Astrocyte of the cerebellum (primary cell): ENCODE measurements at regions of chr15 and their contacts with region 1.

Region 1: DNA sequence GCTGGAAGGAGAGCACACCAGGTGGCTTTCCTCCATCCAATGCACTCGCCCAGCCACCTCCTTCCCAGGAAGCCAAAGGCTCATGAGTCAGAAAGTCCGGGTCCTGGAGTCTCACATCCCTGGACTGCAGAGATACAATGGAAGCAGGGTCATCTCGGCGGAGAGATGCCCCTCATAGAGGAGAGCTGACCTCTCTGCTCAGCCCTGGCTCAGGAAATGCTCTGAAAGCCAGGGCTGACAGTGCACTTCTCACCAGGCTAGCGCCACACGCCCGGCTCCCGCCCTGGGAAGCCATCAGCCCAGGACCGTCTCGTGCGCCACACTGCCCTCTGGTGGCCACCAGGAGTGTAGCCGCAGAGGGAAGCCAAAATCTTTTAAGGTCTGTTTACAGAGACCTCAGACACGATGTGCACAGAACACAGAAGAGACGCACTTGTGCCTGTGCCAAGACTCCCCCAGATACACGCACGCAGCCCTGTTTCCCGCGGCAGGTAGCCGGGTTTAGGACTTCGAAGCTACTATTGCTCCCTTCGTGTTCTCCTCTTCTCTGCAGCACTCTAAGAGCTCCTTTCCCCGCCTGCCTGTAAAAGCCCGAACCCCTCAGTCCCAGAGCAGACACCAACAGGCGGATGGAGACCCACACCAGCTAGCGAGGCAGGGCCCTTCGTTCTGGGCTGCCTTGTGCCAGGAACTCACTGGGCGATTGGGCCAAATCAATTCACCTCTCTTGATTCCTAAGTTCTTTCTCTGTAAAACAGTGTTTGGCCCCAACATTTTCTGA is 9.7 kb downstream of the NTRK3 start:
- DNase-seq: peak; percentile 42
- H3K4me3 ChIP-seq: peak overlapping the region; percentile 22
- CTCF ChIP-seq: peak; percentile 92

Region 2: GRCh38 chr15:87144775-87145174 is 1102.1 kb before region 1 on chr15:
- in situ Hi-C with region 1: loop called (anchors 5 kb)
- DNase-seq: no peak
- H3K4me3 ChIP-seq: no peak overlapping the region
- CTCF ChIP-seq: no peak

Region 3: GRCh38 chr15:88193415-88193814 is 53.4 kb before region 1 on chr15:
- in situ Hi-C with region 1: loop called (anchors 5 kb)
- DNase-seq: no peak
- H3K4me3 ChIP-seq: no peak overlapping the region
- CTCF ChIP-seq: no peak

Region 4: DNA sequence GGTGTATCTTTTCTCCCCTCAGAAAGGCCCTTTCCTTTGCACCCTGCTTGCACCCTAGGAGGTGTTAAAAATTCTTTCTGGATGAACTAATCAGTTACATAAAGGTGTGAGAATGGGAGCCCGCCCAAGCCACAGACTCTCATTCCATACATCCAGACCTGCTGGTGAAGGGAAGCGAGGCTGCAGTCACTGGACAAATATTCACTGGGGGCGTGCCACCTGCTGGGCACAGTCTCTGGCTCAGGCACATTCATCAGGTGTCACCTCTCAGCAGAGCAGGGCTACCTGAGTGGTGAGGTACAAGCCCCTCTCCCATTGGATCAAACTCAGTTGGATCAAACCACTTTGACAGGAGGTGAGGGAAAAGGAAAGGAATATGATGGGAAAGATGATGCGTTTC is 42.3 kb before region 1 on chr15:
- in situ Hi-C with region 1: no loop called
- DNase-seq: no peak
- H3K4me3 ChIP-seq: no peak overlapping the region
- CTCF ChIP-seq: no peak

Region 5: DNA sequence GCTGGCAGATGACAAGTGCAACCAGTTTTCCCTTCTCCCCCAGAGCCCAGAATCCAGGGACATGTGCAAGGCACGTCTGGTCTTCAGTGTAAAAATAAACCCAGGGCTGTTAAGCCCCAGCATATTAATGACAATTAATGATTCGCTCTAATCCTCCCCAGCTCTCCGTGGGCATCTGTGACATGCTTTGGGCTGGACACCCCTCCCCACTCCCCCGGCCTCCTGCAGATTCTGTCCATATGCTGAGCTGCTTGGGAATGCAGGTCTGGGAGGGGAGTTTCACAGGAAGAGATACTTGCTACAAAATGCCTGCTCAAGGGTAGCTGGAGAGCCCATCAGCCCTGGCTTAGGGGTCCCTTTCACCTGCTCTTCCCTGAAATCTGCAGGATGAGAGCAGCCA is 52.6 kb after region 1 on chr15:
- in situ Hi-C with region 1: no loop called
- DNase-seq: no peak
- H3K4me3 ChIP-seq: no peak overlapping the region
- CTCF ChIP-seq: no peak

Region 6: DNA sequence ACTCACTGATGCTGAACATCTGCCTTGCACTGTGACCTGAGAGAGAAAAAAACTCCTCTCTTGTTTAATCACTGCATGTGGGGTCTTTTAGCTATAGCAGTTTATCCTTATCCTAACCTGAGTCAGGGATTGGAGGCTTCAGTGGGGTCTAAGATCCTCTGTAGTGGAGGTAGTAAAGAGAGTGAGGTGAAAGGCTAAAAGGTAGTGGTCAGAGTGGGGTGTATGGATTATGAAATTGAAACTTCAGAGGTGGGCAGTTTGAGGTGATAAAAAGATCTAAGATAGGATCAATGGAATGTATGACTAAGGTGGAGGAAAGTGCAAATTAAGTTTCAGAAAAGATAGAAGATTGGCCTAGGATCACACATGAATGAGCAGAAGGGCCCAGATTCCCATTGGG is 263.1 kb after region 1 on chr15:
- in situ Hi-C with region 1: no loop called
- DNase-seq: no peak
- H3K4me3 ChIP-seq: no peak overlapping the region
- CTCF ChIP-seq: no peak